ENCODE measurements at regions of chr6 and their contacts with region 1.

Region 1: GRCh38 chr6:31665501-31666336 is at the start of gene CSNK2B:
- DNase-seq: peak; percentile 98
- H3K4me3 Mint-ChIP-seq: peak within 1 kb of the TSS; percentile 99
- H3K27ac Mint-ChIP-seq: peak within 1 kb of the TSS; percentile 99
- H3K4me1 Mint-ChIP-seq: peaks cover 31% of the 10 kb centered on the region
- H3K27me3 Mint-ChIP-seq: no peaks in the 10 kb centered on the region
- CTCF ChIP-seq: no peak
- total RNA-seq, gene CSNK2B: 197 and 209 TPM in 2 replicates

Region 2: DNA sequence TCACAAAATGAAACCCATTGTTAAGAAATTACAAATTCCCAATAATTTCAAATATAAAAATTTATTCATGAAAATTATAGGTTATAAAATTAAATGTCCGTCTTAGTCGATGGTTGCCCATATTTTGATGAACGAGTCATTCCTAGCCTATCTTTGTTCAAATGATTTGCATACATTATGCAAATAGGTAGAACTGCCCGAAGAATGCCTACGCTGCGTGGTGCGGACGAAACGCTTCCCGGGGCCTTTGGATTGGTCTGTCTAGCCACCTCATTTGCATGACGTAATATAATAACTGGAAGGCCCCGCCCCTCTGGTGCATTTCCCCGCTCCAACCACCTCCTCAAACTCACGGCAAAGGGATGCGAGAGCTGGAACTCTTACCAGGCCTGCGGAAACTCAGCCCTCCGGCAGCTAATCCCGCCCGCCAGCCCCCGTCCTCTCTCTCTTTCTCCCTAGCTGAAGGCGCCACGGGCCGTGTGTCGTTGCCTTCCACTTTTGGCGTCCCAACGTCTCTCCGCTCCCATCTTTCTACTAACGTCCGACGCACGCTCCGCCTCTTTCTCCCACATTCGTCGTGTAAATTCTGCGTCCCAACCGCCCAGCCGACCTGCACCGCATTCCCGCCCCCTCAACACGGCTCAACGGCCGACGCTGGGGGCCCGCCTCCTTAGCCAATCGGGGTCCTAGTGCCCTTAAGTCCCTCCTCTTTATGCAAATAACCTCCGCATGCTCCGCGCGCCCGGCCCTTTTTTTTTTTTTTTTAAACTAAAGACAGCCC is 45.7 kb before region 1 on chr6:
- CTCF ChIA-PET with region 1: no interaction called
- POLR2A ChIA-PET with region 1: interaction called, 24 read pairs
- intact Hi-C with region 1: loop called (anchors 5 kb)
- DNase-seq: peak; percentile 99
- H3K4me3 Mint-ChIP-seq: peak overlapping the region; percentile 76
- H3K27ac Mint-ChIP-seq: peak overlapping the region; percentile 89
- H3K4me1 Mint-ChIP-seq: peaks cover 17% of the 10 kb centered on the region
- H3K27me3 Mint-ChIP-seq: no peaks in the 10 kb centered on the region
- CTCF ChIP-seq: no peak

Region 3: DNA sequence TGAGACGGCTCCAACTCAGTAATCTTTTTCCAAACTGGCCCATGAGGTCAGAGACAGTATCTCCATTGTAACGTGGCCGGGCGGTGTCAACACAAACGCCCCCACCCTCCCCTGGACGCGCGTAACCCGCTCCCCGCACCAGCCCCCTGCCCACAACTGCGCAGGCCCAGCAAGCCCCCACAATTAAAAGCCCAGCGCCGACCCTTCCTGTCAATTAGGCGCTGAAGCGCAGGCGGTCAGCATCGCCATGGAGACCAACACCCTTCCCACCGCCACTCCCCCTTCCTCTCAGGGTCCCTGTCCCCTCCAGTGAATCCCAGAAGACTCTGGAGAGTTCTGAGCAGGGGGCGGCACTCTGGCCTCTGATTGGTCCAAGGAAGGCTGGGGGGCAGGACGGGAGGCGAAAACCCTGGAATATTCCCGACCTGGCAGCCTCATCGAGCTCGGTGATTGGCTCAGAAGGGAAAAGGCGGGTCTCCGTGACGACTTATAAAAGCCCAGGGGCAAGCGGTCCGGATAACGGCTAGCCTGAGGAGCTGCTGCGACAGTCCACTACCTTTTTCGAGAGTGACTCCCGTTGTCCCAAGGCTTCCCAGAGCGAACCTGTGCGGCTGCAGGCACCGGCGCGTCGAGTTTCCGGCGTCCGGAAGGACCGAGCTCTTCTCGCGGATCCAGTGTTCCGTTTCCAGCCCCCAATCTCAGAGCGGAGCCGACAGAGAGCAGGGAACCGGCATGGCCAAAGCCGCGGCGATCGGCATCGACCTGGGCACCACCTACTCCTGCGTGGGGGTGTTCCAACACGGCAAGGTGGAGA is 149.5 kb after region 1 on chr6 and contains the starts of genes HSPA1A and HSPA1L:
- CTCF ChIA-PET with region 1: no interaction called
- POLR2A ChIA-PET with region 1: interaction called, 20 read pairs
- intact Hi-C with region 1: no loop called
- DNase-seq: peak; percentile 99
- H3K4me3 Mint-ChIP-seq: peak within 1 kb of the TSS; percentile 89
- H3K27ac Mint-ChIP-seq: peak within 1 kb of the TSS; percentile 97
- H3K4me1 Mint-ChIP-seq: peaks cover 11% of the 10 kb centered on the region
- H3K27me3 Mint-ChIP-seq: no peaks in the 10 kb centered on the region
- CTCF ChIP-seq: no peak
- total RNA-seq, gene HSPA1A: 20.3 and 34.0 TPM in 2 replicates
- total RNA-seq, gene HSPA1L: 0.35 and 0.79 TPM in 2 replicates

Region 4: GRCh38 chr6:31862344-31863227 is 196.9 kb after region 1 on chr6 and contains the start of gene NEU1:
- CTCF ChIA-PET with region 1: no interaction called
- POLR2A ChIA-PET with region 1: interaction called, 15 read pairs
- intact Hi-C with region 1: no loop called
- DNase-seq: peak; percentile 100
- H3K4me3 Mint-ChIP-seq: peak within 1 kb of the TSS; percentile 89
- H3K27ac Mint-ChIP-seq: peak within 1 kb of the TSS; percentile 66
- H3K4me1 Mint-ChIP-seq: peaks cover 10% of the 10 kb centered on the region
- H3K27me3 Mint-ChIP-seq: no peaks in the 10 kb centered on the region
- CTCF ChIP-seq: no peak
- total RNA-seq, gene NEU1: 19.7 and 43.8 TPM in 2 replicates

Region 5: GRCh38 chr6:31958741-31959739 is 293.3 kb after region 1 on chr6 and contains the starts of genes NELFE and SKIC2:
- CTCF ChIA-PET with region 1: interaction called, 3 read pairs
- POLR2A ChIA-PET with region 1: interaction called, 10 read pairs
- intact Hi-C with region 1: no loop called
- DNase-seq: peak; percentile 96
- H3K4me3 Mint-ChIP-seq: peak within 1 kb of the TSS; percentile 88
- H3K27ac Mint-ChIP-seq: peak within 1 kb of the TSS; percentile 97
- H3K4me1 Mint-ChIP-seq: peaks cover 9% of the 10 kb centered on the region
- H3K27me3 Mint-ChIP-seq: no peaks in the 10 kb centered on the region
- CTCF ChIP-seq: no peak
- total RNA-seq, gene NELFE: 90.7 and 113 TPM in 2 replicates
- total RNA-seq, gene SKIC2: 53.1 and 66.2 TPM in 2 replicates